Ovary (tissue), 10 donors: ENCODE measurements at regions of chr4 and their contacts with region 1.

Region 1: GRCh38 chr4:6327041-6327917 is 57.6 kb downstream of the WFS1 start:
- DNase-seq: peak; percentile 76 to 90 (median 87)
- H3K4me3 ChIP-seq: no peak overlapping the region
- H3K27ac ChIP-seq: no peak overlapping the region
- H3K4me1 ChIP-seq: no peaks in the 10 kb centered on the region
- H3K27me3 ChIP-seq: no peaks in the 10 kb centered on the region
- CTCF ChIP-seq: peak; percentile 97
- EP300 ChIP-seq: no peak
- POLR2A ChIP-seq: peak; percentile 19

Region 2: GRCh38 chr4:6250235-6250983 is 76.9 kb before region 1 on chr4:
- intact Hi-C with region 1: loop called in 3 of 4 experiments (anchors 2 kb)
- DNase-seq: no peak
- H3K4me3 ChIP-seq: no peak overlapping the region
- H3K27ac ChIP-seq: no peak overlapping the region
- H3K4me1 ChIP-seq: no peaks in the 10 kb centered on the region
- H3K27me3 ChIP-seq: no peaks in the 10 kb centered on the region
- CTCF ChIP-seq: peak; percentile 71 to 81 (median 77)
- EP300 ChIP-seq: no peak
- POLR2A ChIP-seq: no peak

Region 3: DNA sequence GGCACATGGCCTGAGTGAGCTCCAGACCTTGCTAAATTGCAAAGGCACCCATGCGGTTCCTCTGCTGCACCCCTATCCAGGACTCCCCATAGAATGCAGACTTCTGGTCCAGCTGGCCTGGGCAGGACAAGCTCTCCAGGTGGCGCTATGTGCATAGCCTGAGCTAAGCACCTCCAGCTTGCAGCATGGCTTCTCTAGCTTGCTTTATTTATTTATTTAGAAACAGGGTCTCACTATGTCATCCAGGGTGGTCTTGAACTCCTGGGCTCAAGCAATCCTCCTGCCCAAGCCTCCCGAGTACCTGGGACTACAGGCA is 63.1 kb before region 1 on chr4:
- intact Hi-C with region 1: loop called in 2 of 4 experiments (anchors 2 to 5 kb)
- DNase-seq: peak; percentile 60 to 81 (median 74)
- H3K4me3 ChIP-seq: no peak overlapping the region
- H3K27ac ChIP-seq: no peak overlapping the region
- H3K4me1 ChIP-seq: peaks cover 3% of the 10 kb centered on the region
- H3K27me3 ChIP-seq: no peaks in the 10 kb centered on the region
- CTCF ChIP-seq: peak; percentile 44 to 57 (median 57)
- EP300 ChIP-seq: no peak
- POLR2A ChIP-seq: no peak

Region 4: GRCh38 chr4:6546681-6547447 is 219.6 kb after region 1 on chr4:
- intact Hi-C with region 1: loop called (anchors 5 to 10 kb)
- DNase-seq: peak in 2 of 5 donors; percentile 33 to 51
- H3K4me3 ChIP-seq: no peak overlapping the region
- H3K27ac ChIP-seq: no peak overlapping the region
- H3K4me1 ChIP-seq: no peaks in the 10 kb centered on the region
- H3K27me3 ChIP-seq: no peaks in the 10 kb centered on the region
- CTCF ChIP-seq: peak; percentile 15 to 36 (median 19)
- EP300 ChIP-seq: no peak
- POLR2A ChIP-seq: no peak

Region 5: DNA sequence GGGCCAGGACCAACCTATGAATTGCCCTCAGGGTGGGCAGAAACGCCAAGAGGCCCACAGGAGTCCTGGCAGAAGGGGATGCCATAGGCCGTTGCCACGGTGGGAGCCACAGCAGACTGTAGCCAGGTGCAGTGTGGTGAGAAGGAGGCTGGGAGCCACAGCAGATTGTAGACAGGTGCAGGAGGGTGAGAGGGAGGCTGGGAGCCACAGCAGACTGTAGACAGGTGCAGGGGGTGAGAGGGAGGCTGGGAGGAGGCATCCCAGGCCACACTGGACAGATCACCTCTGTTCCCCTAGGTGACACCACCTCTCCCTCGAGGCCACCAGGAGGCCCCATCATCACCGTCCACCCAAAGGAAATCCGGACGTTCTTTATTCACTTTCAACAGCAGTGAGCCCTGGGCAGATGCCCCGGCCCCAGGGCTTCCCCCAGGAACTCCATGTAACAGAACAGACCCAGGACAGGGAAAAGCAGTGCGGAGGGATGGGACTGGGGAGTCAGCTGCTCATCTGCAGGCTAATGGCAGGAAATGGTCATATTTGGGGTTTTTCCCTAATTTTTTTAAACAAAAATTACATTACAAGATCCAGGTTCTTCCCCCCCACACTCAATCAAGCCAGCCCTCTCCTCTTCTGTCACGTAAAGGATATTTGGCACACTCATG is 293.7 kb after region 1 on chr4:
- intact Hi-C with region 1: no loop called
- DNase-seq: no peak
- H3K4me3 ChIP-seq: no peak overlapping the region
- H3K27ac ChIP-seq: no peak overlapping the region
- H3K4me1 ChIP-seq: peaks cover 3% of the 10 kb centered on the region
- H3K27me3 ChIP-seq: no peaks in the 10 kb centered on the region
- CTCF ChIP-seq: no peak
- EP300 ChIP-seq: no peak
- POLR2A ChIP-seq: no peak

Region 6: GRCh38 chr4:6885951-6886557 is 558.8 kb after region 1 on chr4:
- intact Hi-C with region 1: no loop called
- DNase-seq: peak in 2 of 5 donors; percentile 33 to 51
- H3K4me3 ChIP-seq: no peak overlapping the region
- H3K27ac ChIP-seq: peak overlapping the region in 1 of 2 donors; percentile 25
- H3K4me1 ChIP-seq: no peaks in the 10 kb centered on the region
- H3K27me3 ChIP-seq: no peaks in the 10 kb centered on the region
- CTCF ChIP-seq: peak in 1 of 3 donors; percentile 25
- EP300 ChIP-seq: no peak
- POLR2A ChIP-seq: no peak